H1 (cell line): ENCODE measurements at regions of chr11 and their contacts with region 1.

Region 1: DNA sequence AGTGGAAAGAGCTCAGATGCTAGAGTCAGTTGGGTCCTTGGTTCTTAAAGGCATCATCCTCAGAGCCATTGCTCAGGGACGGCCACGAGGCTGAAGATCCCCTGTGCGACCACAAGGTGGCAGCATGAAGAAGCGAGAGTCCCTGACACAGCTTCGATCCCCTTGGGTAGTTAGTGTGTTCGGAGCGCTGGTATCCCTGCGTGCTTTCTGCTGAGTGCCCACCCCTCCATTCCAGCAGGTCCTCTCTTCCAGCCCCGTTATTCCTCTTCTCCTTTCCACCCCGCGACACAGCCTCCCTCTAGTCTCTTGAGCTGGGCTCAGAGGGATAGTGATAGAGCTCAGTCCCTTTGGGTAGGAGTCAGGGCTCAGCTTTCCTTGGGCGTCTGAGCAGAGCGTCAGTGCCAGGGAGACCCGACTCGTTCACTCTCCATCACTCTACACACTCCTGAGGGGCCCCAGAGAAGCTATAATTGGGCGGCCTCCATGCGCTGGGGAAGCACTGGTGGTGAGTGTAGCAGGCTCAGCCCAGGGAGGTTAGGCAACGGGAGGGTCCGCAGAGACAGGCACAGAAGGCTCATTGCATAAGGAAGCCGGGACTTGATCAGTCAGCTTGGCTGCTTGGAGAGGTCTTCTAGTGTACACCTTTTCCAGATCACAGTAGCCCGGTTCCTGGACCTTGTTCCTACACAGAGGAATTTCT is at the start of gene OR51D1:
- DNase-seq: peak; percentile 33 to 86
- H3K4me3 ChIP-seq: 0 out of 8 replicates have a peak within 1 kb of the TSS, but pooled peaks of 1 of the 4 experiments have one; percentile 24
- H3K27ac ChIP-seq: no peak within 1 kb of the TSS
- H3K4me1 ChIP-seq: no peaks in the 10 kb centered on the region
- H3K27me3 ChIP-seq: peaks cover 0 to 7% (median 4%) of the 10 kb centered on the region in 4 experiments; a peak in 5 of 7 replicates
- CTCF ChIP-seq: peak; percentile 88 to 99 (median 92)
- EP300 ChIP-seq: no peak
- POLR2A ChIP-seq: no peak
- RAD21 ChIP-seq: peak; percentile 95
- total RNA-seq, gene OR51D1: not detected in 2 replicates

Region 2: DNA sequence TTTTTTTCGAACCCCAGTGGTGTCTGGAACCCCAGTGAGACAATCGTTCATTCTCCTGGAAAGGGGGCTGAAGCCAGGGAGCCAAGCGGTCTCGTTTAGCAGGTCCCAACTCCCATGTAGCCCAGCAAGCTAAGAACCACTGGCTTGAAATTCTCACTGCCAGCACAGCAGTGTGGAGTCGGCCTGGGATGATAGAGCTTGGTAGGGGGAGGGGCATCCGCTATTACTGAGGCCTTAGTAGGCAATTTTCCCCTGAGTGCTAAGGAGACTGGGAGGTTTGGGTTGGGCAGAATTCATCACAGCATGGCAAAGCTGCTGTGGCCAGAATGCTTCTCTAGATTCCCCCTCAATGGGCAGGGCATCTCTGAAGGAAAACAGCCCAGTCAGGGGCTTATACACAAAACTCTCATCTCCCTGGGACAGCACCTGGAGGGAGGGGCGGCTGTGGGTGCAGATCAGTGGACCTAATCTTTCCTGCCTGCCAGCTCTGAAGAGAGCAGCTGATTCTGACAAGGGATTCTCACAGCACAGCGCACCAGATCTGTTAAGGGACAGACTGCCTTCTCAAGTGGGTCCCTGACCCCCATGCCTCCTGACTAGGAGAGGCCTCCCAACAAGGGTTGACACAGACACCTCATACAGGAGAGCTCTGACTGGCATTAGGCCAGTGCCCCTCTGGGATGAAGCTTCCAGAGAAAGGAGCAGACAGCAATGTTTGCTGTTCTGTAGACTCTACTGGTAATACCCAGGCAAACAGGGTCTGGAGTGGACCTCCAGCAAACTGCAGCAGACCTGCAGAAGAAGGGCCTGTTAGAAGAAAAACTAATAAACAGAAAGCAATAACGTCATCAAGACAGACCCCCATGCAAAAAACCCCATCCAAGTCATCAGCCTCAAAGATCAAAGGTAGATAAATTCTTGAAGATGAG is 77.3 kb before region 1 on chr11:
- CTCF ChIA-PET with region 1: no interaction called
- POLR2A ChIA-PET with region 1: no interaction called
- DNase-seq: no peak
- H3K4me3 ChIP-seq: no peak overlapping the region
- H3K27ac ChIP-seq: no peak overlapping the region
- H3K4me1 ChIP-seq: peaks cover 0 to 3% (median 2%) of the 10 kb centered on the region in 4 experiments; a peak in 3 of 7 replicates
- H3K27me3 ChIP-seq: no peaks in the 10 kb centered on the region
- CTCF ChIP-seq: no peak
- EP300 ChIP-seq: no peak
- POLR2A ChIP-seq: no peak
- RAD21 ChIP-seq: no peak

Region 3: DNA sequence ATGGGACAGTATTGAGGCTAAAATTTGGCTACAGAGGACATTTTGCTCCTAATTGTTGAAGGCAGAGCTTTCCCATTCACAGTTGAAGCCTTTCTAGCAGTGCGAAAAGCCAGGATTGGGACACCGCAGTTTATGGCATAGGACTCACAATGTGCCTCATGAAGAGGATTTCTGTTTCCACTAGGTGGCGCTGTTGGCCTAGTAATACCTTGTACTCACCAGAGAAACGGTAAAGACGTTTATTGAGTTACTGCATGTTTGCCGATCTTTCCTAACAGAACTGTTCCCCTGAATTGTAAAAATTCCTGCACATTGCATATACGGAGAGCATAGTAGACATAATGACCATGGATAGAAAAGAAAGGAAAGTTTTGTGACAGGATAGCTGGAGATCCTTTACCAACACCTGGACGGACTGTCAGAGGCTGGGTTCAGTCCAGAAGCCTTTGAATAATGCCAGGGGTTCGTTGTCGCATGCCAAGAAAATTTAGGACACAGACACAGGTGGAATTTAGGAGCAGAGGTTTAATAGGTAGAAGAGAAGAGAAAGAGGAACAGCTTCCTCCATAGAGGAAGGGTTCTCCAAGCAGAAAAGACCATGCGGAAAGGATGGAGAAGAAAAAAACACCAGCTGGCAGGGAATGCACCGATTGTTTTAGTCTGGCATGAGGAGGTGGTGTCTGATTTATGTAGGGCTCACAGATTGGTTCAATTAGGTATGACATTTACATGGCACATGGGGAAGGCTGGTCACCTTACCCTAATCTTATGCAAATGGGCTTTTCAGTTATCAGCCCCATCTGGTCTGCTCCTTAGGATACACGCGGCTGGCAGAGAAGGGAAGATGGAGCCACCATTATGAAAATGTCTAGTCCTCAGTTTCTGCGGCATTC is 10.7 kb before region 1 on chr11:
- CTCF ChIA-PET with region 1: interaction called, 58 read pairs
- POLR2A ChIA-PET with region 1: no interaction called
- DNase-seq: peak in 1 of 2 experiments; percentile 84
- H3K4me3 ChIP-seq: no peak overlapping the region
- H3K27ac ChIP-seq: no peak overlapping the region
- H3K4me1 ChIP-seq: no peaks in the 10 kb centered on the region
- H3K27me3 ChIP-seq: no peaks in the 10 kb centered on the region
- CTCF ChIP-seq: peak; percentile 4 to 81 (median 65)
- EP300 ChIP-seq: no peak
- POLR2A ChIP-seq: no peak
- RAD21 ChIP-seq: peak; percentile 93

Region 4: GRCh38 chr11:4704054-4704789 is 67.1 kb after region 1 on chr11 and contains the start of gene MMP26:
- CTCF ChIA-PET with region 1: interaction called, 18 read pairs
- POLR2A ChIA-PET with region 1: no interaction called
- DNase-seq: peak in 1 of 2 experiments; percentile 46
- H3K4me3 ChIP-seq: peak within 1 kb of the TSS in 3 of 4 experiments; percentile 10 to 46 (median 12); a peak in 4 of 8 replicates
- H3K27ac ChIP-seq: peak within 1 kb of the TSS; percentile 25; the same call in 1 of the 2 replicates
- H3K4me1 ChIP-seq: peaks cover 0 to 7% (median 5%) of the 10 kb centered on the region in 4 experiments; a peak in 4 of 7 replicates
- H3K27me3 ChIP-seq: no peaks in the 10 kb centered on the region
- CTCF ChIP-seq: no peak
- EP300 ChIP-seq: no peak; a peak in 1 of 3 replicates
- POLR2A ChIP-seq: no peak
- RAD21 ChIP-seq: no peak
- total RNA-seq, gene MMP26: not detected in 2 replicates

Region 5: DNA sequence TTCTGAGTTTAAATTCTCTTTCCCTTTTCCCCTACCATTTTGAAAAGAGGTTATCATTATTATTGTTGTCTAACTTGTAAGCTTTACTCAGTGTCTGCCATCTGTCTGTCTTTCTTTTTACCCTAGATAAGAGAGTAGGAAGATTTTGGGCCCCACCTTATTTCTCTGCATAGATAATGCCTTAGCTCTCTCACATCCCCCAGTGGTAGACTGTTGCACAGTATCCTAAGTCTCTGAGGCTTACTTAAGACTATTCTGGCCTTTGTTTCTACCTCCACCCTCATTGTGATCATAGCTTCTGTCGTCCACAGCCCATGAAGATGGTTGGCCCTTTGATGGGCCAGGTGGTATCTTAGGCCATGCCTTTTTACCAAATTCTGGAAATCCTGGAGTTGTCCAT is 353.9 kb after region 1 on chr11:
- CTCF ChIA-PET with region 1: interaction called, 13 read pairs
- POLR2A ChIA-PET with region 1: no interaction called
- DNase-seq: no peak
- H3K4me3 ChIP-seq: no peak overlapping the region
- H3K27ac ChIP-seq: no peak overlapping the region
- H3K4me1 ChIP-seq: no peaks in the 10 kb centered on the region; a peak in 1 of 7 replicates
- H3K27me3 ChIP-seq: peaks cover 0 to 1% (median 0%) of the 10 kb centered on the region in 4 experiments; a peak in 1 of 7 replicates
- CTCF ChIP-seq: peak in 2 of 3 experiments; percentile 16 to 28; a peak in 1 of 4 replicates
- EP300 ChIP-seq: no peak
- POLR2A ChIP-seq: no peak
- RAD21 ChIP-seq: peak; percentile 39 to 52

Region 6: GRCh38 chr11:5013012-5013411 is 375.9 kb after region 1 on chr11:
- CTCF ChIA-PET with region 1: interaction called, 10 read pairs
- POLR2A ChIA-PET with region 1: no interaction called
- DNase-seq: no peak
- H3K4me3 ChIP-seq: no peak overlapping the region
- H3K27ac ChIP-seq: no peak overlapping the region
- H3K4me1 ChIP-seq: no peaks in the 10 kb centered on the region
- H3K27me3 ChIP-seq: no peaks in the 10 kb centered on the region
- CTCF ChIP-seq: no peak
- EP300 ChIP-seq: no peak
- POLR2A ChIP-seq: no peak
- RAD21 ChIP-seq: no peak